ENCODE measurements at regions of chr2 and their contacts with region 1.

Region 1: DNA sequence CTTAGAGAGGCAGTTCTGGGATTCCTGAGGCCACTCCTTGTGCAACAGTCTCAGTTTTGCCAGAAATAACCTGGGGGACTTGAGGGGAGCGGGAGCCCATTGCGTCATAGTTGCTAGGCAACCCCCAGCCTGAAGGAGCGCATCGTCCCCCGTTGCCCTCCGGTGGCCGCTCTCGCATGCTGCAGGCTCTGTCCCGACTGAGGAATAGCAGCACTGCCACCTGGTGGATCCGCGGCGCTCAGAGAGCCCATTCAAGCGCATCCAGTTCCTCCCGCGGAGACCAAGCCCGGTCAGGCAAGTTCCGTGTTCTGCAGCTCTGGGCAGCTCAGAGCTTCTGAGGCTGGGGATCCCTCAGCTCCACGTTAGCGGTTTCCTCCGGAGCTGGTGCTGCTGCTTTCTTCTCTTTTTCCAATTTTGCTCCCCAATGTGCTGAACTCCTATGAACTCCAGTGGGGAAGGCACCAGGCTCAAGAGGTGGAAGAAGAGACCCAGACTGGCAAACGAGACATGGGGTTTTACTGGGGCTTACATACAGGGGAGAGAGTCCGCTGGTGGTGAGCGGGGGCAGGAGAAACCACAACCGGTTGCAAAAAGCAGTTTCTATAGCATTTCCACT is 15.1 kb downstream of the SLC4A3 start:
- DNase-seq: peak; percentile 93
- H3K4me3 ChIP-seq: no peak overlapping the region
- H3K27ac ChIP-seq: no peak overlapping the region
- H3K4me1 ChIP-seq: no peaks in the 10 kb centered on the region
- H3K27me3 ChIP-seq: no peaks in the 10 kb centered on the region
- CTCF ChIP-seq: peak; percentile 99

Region 2: DNA sequence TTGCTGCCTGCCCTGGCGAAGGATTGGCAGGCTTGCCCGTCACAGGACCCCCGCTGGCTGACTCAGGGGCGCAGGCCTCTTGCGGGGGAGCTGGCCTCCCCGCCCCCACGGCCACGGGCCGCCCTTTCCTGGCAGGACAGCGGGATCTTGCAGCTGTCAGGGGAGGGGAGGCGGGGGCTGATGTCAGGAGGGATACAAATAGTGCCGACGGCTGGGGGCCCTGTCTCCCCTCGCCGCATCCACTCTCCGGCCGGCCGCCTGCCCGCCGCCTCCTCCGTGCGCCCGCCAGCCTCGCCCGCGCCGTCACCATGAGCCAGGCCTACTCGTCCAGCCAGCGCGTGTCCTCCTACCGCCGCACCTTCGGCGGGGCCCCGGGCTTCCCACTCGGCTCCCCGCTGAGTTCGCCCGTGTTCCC is 224.4 kb before region 1 on chr2 and contains the start of gene DES:
- intact Hi-C with region 1: no loop called
- DNase-seq: no peak
- H3K4me3 ChIP-seq: peak within 1 kb of the TSS; percentile 24
- H3K27ac ChIP-seq: peak within 1 kb of the TSS; percentile 40
- H3K4me1 ChIP-seq: no peaks in the 10 kb centered on the region
- H3K27me3 ChIP-seq: peaks cover 15% of the 10 kb centered on the region
- CTCF ChIP-seq: no peak
- total RNA-seq, gene DES: 24.0 to 917 TPM

Region 3: DNA sequence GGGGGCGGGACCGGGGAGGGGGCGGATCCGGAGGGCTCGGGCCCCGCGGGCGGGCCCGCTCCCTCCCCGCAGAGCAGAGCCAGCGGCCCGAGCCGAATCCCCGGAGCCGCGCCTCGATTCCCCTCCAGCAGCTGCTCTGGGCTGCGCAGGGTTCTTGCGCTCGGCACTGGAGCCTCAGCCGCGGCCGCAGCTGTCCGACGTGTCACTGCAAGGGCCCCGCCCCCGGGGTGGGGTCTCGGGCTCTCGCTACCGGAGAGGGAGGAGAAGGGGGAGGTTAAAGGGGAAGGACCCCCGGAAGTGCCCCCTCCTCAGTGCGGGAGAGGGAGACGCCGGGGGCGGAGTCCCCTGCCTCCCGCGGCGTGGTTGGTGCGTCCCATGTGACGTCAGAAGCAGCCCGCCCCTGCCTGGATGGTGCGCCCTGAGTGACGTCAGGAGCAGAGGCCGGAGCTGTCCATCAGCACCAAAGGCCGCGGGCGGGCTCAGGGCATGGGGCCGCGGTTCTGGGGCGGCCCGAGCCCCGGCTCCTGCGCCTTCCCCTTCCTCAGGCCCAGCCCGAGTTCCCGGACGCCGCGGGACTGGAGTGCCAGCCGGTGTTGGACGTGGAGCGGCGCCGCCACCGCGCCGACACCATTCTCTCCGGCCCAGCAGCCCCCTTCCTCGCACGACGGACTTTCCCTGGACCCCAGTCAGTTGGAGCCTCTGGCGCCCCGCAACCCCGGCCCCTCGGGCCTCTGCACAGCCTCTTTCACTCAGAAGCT is 98.8 kb before region 1 on chr2 and contains the starts of genes CHPF and TMEM198:
- intact Hi-C with region 1: loop called (anchors 2 kb)
- DNase-seq: peak; percentile 97
- H3K4me3 ChIP-seq: peak within 1 kb of the TSS; percentile 74
- H3K27ac ChIP-seq: peak within 1 kb of the TSS; percentile 92
- H3K4me1 ChIP-seq: peaks cover 4% of the 10 kb centered on the region
- H3K27me3 ChIP-seq: no peaks in the 10 kb centered on the region
- CTCF ChIP-seq: no peak
- total RNA-seq, gene CHPF: 43.1 to 43.5 TPM
- total RNA-seq, gene TMEM198: 1.7 to 2.9 TPM

Region 4: DNA sequence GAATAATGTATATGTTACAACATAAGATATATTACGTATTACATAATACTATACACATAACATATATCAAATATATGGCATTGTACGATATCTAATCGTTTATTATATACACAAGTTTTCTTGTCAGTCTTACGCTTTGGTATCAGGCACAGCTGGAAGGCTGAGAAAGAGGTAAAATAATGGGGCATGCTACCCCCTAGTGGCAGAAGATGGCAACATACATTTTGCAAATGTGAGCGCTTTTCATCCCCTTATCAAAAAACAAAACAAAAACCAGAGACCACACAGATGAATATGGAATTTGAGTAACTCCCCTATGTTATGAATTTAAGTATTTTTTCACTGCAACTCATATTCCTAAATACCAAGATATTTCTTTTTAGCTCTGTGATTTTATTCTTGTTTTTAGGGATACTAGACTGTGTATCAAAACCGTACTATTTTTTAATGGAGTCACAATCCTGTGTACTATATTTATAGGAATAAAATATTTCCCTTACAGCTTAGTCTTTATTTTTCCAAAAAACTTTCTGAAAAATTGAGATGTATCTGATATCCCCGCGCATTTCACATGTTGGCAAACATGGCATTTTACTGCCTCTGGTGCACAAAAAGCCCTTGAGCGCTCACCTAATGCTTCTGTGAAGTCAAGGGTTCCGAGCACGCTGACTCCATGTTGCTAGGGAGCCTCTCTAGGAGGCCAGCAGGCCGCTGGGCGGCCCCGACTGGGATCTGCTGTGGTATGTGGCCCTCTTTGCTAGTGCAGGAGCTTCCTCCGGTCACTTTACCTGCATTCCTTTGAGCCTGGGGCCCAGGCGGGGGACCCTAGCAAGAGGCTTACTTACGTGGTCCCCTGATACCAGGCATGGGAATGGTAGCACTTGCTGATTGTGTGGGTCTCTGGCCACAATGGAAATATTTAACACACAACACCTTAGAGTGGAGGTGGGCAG is 47.4 kb after region 1 on chr2:
- intact Hi-C with region 1: loop called (anchors 5 kb)
- DNase-seq: peak; percentile 51
- H3K4me3 ChIP-seq: no peak overlapping the region
- H3K27ac ChIP-seq: no peak overlapping the region
- H3K4me1 ChIP-seq: no peaks in the 10 kb centered on the region
- H3K27me3 ChIP-seq: peaks cover 8% of the 10 kb centered on the region
- CTCF ChIP-seq: peak; percentile 71